HEK293 (cell line): ENCODE measurements at regions of chr19 and their contacts with region 1.

Region 1: GRCh38 chr19:33771384-33772101 is 25.1 kb upstream of the KCTD15 start:
- H3K4me3 ChIP-seq: no peak overlapping the region
- H3K27ac ChIP-seq: no peak overlapping the region
- H3K4me1 ChIP-seq: no peaks in the 10 kb centered on the region
- CTCF ChIP-seq: peak; percentile 99

Region 2: GRCh38 chr19:33406521-33407139 is 364.9 kb before region 1 on chr19:
- CTCF ChIA-PET with region 1: interaction called, 272 read pairs
- POLR2A ChIA-PET with region 1: no interaction called
- H3K4me3 ChIP-seq: no peak overlapping the region
- H3K27ac ChIP-seq: no peak overlapping the region
- H3K4me1 ChIP-seq: no peaks in the 10 kb centered on the region
- CTCF ChIP-seq: peak; percentile 99

Region 3: GRCh38 chr19:33639035-33639681 is 132.4 kb before region 1 on chr19:
- CTCF ChIA-PET with region 1: no interaction called
- POLR2A ChIA-PET with region 1: no interaction called
- H3K4me3 ChIP-seq: no peak overlapping the region
- H3K27ac ChIP-seq: peak overlapping the region; percentile 61; the same call in 1 of the 2 replicates
- H3K4me1 ChIP-seq: peaks cover 18% of the 10 kb centered on the region
- CTCF ChIP-seq: no peak

Region 4: GRCh38 chr19:33740811-33741396 is 30.6 kb before region 1 on chr19:
- CTCF ChIA-PET with region 1: interaction called, 11 read pairs
- POLR2A ChIA-PET with region 1: no interaction called
- H3K4me3 ChIP-seq: no peak overlapping the region
- H3K27ac ChIP-seq: no peak overlapping the region
- H3K4me1 ChIP-seq: no peaks in the 10 kb centered on the region
- CTCF ChIP-seq: no peak

Region 5: GRCh38 chr19:33758541-33759013 is 13.0 kb before region 1 on chr19:
- CTCF ChIA-PET with region 1: interaction called, 19 read pairs
- POLR2A ChIA-PET with region 1: no interaction called
- H3K4me3 ChIP-seq: no peak overlapping the region
- H3K27ac ChIP-seq: no peak overlapping the region
- H3K4me1 ChIP-seq: 0 out of 2 replicates have a peak, but pooled peaks cover 2% of the 10 kb centered on the region
- CTCF ChIP-seq: no peak

Region 6: DNA sequence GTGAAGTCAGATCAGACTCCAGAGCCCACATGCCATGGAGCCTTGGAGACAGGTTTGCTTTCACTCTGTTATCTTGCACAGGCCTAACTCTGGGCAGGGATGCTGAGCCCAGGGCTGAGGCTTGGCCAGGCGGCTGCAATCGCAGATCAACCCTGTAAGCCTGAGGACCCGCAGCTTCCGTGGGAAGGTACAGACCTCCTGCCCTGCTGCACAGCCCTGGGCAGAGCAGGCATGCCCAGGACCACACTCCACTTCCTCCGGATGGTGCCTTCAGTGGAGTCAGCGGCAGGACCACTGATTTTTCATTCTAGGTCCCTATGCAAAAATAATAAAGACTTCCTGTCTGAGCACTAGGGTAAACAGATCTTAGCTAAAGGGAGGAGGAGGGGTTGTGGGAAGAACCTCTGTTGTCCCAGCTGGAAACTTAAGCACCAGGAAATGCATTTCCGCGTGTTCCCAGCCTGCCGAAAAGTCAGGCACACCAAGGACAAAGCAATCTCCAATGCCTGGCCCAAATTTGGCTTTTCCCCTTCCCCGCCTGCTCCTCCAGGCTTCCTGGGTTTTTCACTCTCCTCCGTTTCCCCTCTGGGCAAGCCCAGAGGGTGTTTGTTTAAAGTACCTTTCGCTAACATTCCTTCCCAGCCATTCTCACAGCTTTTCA is 112.4 kb after region 1 on chr19:
- CTCF ChIA-PET with region 1: no interaction called
- POLR2A ChIA-PET with region 1: no interaction called
- H3K4me3 ChIP-seq: no peak overlapping the region
- H3K27ac ChIP-seq: peak overlapping the region; percentile 57; the same call in 1 of the 2 replicates
- H3K4me1 ChIP-seq: peaks cover 11% of the 10 kb centered on the region
- CTCF ChIP-seq: no peak